Activated T-helper 2 cell treated with anti-CD3 and anti-CD28 coated beads, Interferon-gamma antibody, Interleukin-2, Interleukin-4, amounts not matched to agents 10 μg/mL and 5 μg/mL and 100 μg/mL, durations not matched to agents 14 hours and 24 hours and 36 hours (primary cell): ENCODE measurements at regions of chr13 and their contacts with region 1.

Region 1: DNA sequence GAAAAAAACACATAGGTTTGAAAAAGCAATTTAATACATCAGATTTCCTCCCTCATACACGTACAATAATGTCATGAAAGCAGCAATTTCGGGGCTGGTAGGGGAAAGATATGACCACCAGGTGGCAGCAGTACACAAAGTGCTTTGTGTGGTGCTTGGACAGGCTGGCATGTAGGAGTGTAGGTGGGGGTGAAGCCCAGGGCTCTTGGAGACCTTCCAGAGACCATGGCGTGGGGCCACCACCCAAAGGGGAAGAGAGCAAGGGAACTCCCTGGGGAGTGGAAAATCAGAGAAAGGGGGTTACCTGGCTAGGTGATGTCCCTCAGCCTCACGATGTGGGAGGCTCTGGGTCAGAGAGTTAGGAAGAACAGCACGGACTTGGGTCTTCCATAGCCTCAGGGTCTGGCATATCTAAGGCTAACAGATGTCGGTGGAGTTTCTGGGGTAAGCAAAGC is 11.8 kb upstream of the CCNA1 start:
- DNase-seq: peak; percentile 70
- H3K4me3 Mint-ChIP-seq: peak overlapping the region; percentile 13
- H3K27ac Mint-ChIP-seq: peak overlapping the region; percentile 59
- H3K4me1 Mint-ChIP-seq: peaks cover 51% of the 10 kb centered on the region
- H3K27me3 Mint-ChIP-seq: peaks cover 10% of the 10 kb centered on the region

Region 2: GRCh38 chr13:36297366-36298338 is 122.8 kb before region 1 on chr13 and contains the start of gene CCDC169:
- intact Hi-C with region 1: loop called (anchors 5 kb)
- DNase-seq: peak; percentile 57
- H3K4me3 Mint-ChIP-seq: peak within 1 kb of the TSS; percentile 83
- H3K27ac Mint-ChIP-seq: peak within 1 kb of the TSS; percentile 48
- H3K4me1 Mint-ChIP-seq: peaks cover 8% of the 10 kb centered on the region
- H3K27me3 Mint-ChIP-seq: peaks cover 36% of the 10 kb centered on the region
- total RNA-seq, gene CCDC169: 0.23 and 0.46 TPM in 2 replicates

Region 3: DNA sequence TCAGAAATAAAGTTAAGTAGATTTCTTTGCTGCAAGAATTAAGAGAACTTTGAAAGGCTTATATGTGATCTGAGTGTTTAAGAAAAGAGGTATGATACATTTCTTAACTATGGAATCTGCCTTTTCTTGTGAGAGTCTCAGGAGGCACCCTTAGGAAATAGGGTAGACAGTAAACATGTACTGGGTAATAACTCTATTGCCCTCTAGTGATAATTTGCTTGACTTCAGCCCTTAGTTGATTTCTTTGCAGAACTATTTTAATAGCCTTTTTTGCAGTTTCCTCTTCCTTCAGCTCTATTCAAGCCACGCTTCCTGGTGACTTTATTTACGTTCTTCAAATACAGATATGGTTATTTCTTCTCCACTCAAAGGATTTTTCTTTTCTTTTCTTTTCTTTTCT is 25.2 kb before region 1 on chr13:
- intact Hi-C with region 1: no loop called
- DNase-seq: no peak
- H3K4me3 Mint-ChIP-seq: no peak overlapping the region
- H3K27ac Mint-ChIP-seq: no peak overlapping the region
- H3K4me1 Mint-ChIP-seq: no peaks in the 10 kb centered on the region
- H3K27me3 Mint-ChIP-seq: peaks cover 33% of the 10 kb centered on the region

Region 4: GRCh38 chr13:36431654-36432511 is 11.4 kb after region 1 on chr13 and contains the start of gene CCNA1:
- intact Hi-C with region 1: loop called (anchors 1 kb)
- DNase-seq: peak; percentile 32
- H3K4me3 Mint-ChIP-seq: peak within 1 kb of the TSS; percentile 74
- H3K27ac Mint-ChIP-seq: no peak within 1 kb of the TSS
- H3K4me1 Mint-ChIP-seq: peaks cover 27% of the 10 kb centered on the region
- H3K27me3 Mint-ChIP-seq: peaks cover 40% of the 10 kb centered on the region
- total RNA-seq, gene CCNA1: 4.3 and 5.0 TPM in 2 replicates

Region 5: GRCh38 chr13:36475468-36475867 is 55.0 kb after region 1 on chr13:
- intact Hi-C with region 1: loop called (anchors 2 kb)
- DNase-seq: no peak
- H3K4me3 Mint-ChIP-seq: no peak overlapping the region
- H3K27ac Mint-ChIP-seq: no peak overlapping the region
- H3K4me1 Mint-ChIP-seq: no peaks in the 10 kb centered on the region
- H3K27me3 Mint-ChIP-seq: peaks cover 6% of the 10 kb centered on the region

Region 6: DNA sequence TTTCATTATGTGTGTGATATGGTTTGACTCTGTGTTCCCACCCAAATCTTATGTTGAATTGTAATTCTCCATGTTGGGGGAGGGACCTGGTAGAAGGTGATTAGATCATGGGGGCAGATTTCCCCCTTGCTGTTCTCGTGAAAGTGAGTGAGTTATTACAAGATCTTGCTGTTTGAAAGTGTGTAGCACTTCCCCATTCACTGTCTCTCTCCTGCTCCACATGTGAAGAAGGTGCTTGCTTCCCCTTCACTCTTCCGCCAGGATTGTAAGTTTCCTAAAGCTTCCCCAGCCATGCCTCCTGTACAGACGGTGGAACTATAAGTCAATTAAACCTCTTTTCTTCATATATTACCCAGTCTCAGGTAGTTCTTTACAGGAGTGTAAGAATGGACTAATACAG is 199.1 kb after region 1 on chr13:
- intact Hi-C with region 1: no loop called
- DNase-seq: no peak
- H3K4me3 Mint-ChIP-seq: no peak overlapping the region
- H3K27ac Mint-ChIP-seq: no peak overlapping the region
- H3K4me1 Mint-ChIP-seq: no peaks in the 10 kb centered on the region
- H3K27me3 Mint-ChIP-seq: no peaks in the 10 kb centered on the region

Region 7: DNA sequence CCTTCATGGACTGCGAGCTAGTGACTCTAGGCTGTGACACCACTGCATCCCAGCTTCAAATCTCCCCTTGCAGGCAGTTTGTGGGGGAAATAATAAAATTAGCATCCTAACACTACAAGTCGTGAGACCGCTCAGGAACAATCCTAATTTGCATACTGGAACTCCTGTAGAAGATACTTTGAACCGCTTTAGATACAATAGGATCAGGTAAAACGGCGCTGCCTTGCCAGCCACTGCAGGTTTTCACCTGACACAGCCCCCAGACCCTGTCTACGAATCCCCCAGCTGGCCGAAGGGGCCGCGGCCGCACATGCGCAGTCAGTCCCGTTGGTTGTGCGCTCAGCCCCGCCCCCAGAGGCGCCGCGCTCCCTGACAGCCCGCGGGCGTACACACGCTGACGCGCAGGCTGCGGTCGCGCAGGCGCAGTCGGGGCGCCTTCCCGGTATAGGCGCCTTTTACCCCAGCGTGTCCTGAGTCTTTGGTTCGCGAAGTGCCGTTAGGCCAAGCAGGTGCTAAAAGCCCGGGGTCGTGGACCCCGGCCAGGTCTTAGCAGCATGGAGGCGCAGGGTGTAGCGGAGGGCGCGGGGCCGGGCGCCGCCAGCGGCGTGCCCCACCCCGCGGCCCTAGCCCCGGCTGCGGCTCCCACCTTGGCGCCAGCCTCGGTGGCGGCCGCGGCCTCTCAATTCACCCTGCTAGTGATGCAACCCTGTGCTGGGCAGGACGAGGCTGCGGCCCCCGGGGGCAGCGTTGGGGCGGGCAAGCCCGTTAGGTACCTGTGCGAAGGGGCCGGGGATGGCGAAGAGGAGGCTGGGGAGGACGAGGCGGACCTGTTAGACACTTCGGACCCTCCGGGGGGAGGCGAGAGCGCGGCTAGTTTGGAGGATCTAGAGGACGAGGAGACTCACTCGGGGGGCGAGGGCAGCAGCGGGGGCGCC is 398.6 kb after region 1 on chr13 and contains the start of gene RFXAP:
- intact Hi-C with region 1: loop called (anchors 2 kb)
- DNase-seq: peak; percentile 88
- H3K4me3 Mint-ChIP-seq: peak within 1 kb of the TSS; percentile 90
- H3K27ac Mint-ChIP-seq: peak within 1 kb of the TSS; percentile 89
- H3K4me1 Mint-ChIP-seq: peaks cover 43% of the 10 kb centered on the region
- H3K27me3 Mint-ChIP-seq: peaks cover 18% of the 10 kb centered on the region
- total RNA-seq, gene RFXAP: 10.6 and 13.5 TPM in 2 replicates

Region 8: DNA sequence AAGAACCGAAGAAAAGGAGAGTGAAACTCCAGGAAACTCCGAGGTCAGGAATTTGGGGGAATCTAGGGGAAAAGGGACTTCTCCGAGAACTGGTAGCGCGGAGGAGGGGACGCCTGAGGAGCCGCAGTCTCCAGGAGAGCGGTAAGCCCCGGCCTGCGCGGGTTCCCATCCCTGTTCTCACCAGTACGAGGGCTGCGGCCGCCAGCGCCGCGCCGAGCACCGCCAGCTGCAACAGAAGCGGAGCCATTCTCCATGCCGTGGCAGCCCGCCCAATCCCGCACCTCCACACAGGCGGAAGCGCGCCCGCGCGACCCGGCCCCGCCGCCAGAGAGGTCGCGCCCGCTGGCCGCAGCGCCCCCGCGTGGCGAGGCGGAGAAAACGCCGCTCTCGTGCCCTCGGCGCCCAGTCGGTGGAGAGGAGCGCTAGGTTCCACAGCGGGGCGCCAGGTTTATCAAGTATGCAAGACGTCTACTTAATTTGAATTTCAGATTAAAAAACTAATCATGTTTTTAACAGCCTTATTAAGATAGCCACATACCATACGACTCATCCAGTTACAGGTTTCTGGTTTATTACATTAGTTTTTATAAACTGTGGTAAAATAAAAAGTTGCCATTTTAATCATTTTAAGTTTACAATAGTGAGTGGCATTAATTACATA is 578.7 kb after region 1 on chr13 and contains the start of gene ALG5:
- intact Hi-C with region 1: loop called (anchors 5 kb)
- DNase-seq: peak; percentile 93
- H3K4me3 Mint-ChIP-seq: peak within 1 kb of the TSS; percentile 100
- H3K27ac Mint-ChIP-seq: peak within 1 kb of the TSS; percentile 100
- H3K4me1 Mint-ChIP-seq: peaks cover 37% of the 10 kb centered on the region
- H3K27me3 Mint-ChIP-seq: no peaks in the 10 kb centered on the region
- total RNA-seq, gene ALG5: 45.6 and 49.8 TPM in 2 replicates